WTC11 (cell line): ENCODE measurements at regions of chr1 and their contacts with region 1.

Region 1: DNA sequence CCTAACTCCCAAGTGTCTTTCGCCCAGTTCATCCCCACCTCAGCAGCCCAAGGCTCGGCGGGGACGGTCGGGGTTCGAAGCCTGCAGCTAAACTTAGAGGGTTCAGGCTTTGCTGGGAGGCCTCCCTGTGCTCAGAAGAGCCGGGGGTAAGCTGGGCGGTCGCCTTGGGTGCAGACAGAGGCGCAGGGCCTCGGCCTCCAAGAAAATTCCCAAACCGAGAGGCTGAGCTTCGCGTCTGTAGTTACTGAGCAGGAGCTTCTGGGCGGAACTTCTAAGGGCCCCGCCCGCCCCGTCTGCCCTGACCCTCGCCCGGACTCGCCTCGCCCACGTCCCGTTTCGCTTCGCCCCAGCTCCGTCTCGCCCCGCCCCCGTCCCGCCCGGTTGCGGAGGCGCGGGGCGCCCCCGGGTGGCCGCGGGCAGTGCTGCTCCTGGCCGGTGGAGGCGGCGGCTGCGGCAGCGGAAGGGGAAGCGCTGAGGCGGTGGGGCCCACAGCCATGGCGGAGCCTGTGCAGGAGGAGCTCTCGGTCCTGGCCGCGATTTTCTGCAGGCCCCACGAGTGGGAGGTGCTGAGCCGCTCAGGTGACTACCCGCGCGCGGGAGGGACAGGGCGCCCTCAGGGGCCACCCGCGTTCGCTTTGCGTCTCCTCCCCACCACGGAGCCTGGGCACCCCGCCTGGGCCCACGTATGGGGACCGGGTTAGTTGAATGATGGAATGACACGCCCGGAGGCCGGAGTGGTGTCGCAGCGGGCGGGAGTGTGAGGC is at the start of gene RWDD3:
- DNase-seq: peak; percentile 91
- ATAC-seq: peak; percentile 92
- H3K4me3 Mint-ChIP-seq: peak within 1 kb of the TSS; percentile 87
- H3K27ac Mint-ChIP-seq: peak within 1 kb of the TSS; percentile 64
- H3K4me1 Mint-ChIP-seq: peaks cover 18% of the 10 kb centered on the region
- H3K27me3 Mint-ChIP-seq: no peaks in the 10 kb centered on the region; the same call in none of the 2 replicates
- CTCF ChIP-seq: peak; percentile 72
- total RNA-seq, gene RWDD3: 13.7 to 17.4 TPM (median 13.9 TPM) in 3 replicates

Region 2: DNA sequence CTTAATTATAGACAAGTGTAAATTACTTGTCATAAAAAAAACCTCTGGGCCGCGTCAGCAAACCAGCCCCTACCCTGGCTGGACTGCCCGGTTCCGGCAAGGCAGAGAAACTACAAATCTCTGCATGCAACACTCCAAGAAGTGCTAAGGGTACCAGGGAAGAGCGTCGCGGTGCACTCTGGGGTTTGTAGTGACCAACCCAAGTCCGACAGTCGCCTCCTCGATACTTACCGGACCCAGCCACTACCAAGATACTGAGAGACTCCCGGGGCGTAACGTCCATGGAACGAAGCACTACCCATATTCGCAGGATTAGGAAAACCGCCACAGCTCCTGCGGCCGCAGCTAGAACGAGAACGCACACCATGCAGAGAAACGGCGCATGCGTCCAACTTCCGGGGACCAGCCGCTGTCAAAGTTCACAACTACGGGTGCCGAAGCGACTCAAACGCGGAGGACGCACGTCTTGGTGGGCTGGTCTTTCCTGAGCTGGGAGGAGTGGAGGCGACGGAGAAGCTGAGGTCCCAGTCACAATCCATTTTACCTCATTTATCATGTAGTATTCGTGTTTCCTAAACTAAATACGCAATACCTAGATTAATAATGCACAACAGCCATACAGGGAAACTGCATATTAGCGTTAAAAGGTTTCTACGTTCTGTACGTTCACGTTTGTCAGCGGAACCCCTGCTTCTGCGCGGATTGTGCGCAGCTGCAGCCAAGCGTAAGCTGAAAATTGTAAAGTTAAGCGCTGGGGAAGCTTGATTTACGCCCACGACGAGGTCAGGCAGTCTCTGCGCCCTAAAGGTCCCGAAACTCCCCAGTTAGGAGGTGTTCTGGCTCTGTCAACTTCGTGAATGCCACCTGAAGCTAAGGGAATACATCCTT is 161.1 kb before region 1 on chr1 and contains the start of gene ALG14:
- CTCF ChIA-PET with region 1: interaction called, 44 read pairs
- POLR2A ChIA-PET with region 1: interaction called, 4 read pairs
- DNase-seq: peak; percentile 86
- ATAC-seq: peak; percentile 99
- H3K4me3 Mint-ChIP-seq: peak within 1 kb of the TSS; percentile 97
- H3K27ac Mint-ChIP-seq: peak within 1 kb of the TSS; percentile 90
- H3K4me1 Mint-ChIP-seq: peaks cover 9% of the 10 kb centered on the region
- H3K27me3 Mint-ChIP-seq: peaks cover 2% of the 10 kb centered on the region; the same call in 1 of the 2 replicates
- CTCF ChIP-seq: no peak
- total RNA-seq, gene ALG14: 0.94 to 2.3 TPM (median 1.4 TPM) in 3 replicates

Region 3: GRCh38 chr1:95116580-95117206 is 117.2 kb before region 1 on chr1:
- CTCF ChIA-PET with region 1: interaction called, 71 read pairs
- POLR2A ChIA-PET with region 1: interaction called, 7 read pairs
- DNase-seq: peak; percentile 73
- ATAC-seq: peak; percentile 74
- H3K4me3 Mint-ChIP-seq: peak overlapping the region; percentile 92
- H3K27ac Mint-ChIP-seq: peak overlapping the region; percentile 83
- H3K4me1 Mint-ChIP-seq: peaks cover 20% of the 10 kb centered on the region
- H3K27me3 Mint-ChIP-seq: peaks cover 19% of the 10 kb centered on the region
- CTCF ChIP-seq: peak; percentile 58

Region 4: GRCh38 chr1:95223110-95223509 is 10.8 kb before region 1 on chr1:
- CTCF ChIA-PET with region 1: interaction called, 37 read pairs
- POLR2A ChIA-PET with region 1: interaction called, 4 read pairs
- DNase-seq: no peak
- ATAC-seq: no peak
- H3K4me3 Mint-ChIP-seq: no peak overlapping the region
- H3K27ac Mint-ChIP-seq: no peak overlapping the region
- H3K4me1 Mint-ChIP-seq: peaks cover 11% of the 10 kb centered on the region
- H3K27me3 Mint-ChIP-seq: no peaks in the 10 kb centered on the region; the same call in 1 of the 2 replicates
- CTCF ChIP-seq: no peak

Region 5: DNA sequence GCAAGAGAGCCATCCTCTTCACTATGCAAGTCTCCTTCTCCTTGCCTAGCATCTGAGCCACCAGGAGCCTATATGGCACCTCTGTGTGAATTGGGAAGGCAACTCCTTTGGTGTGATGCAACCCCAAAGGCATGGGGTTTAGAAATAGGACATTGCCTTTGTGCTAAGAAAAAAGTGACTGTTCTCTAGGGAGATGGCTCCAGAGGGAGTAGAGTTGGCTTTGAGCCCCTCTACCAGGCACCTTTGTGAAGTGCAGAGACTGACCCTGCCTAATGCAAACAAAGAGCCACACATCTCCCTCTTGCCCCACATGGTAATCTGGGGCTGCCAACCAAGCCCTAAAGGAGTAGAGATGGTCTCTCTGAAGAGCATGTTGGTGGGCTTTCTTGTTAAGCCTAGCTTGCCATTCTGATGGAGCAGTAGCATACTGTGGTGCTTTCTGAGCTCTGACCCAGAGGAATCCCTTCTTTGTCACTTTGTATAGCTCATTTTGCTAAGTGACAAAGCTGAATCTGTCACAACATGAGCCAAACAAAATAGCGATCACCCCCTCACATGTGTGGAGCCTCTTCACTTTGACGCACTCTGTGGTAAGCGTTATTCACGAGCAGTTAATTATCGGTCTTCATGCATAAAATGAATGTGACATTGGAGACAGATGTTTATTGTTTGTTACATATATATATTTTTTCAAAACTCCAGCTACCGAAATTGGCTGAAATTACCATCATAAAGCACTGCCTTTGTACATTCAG is 74.5 kb after region 1 on chr1:
- CTCF ChIA-PET with region 1: no interaction called
- POLR2A ChIA-PET with region 1: no interaction called
- DNase-seq: no peak
- ATAC-seq: peak; percentile 69; the same call in 1 of the 2 replicates
- H3K4me3 Mint-ChIP-seq: no peak overlapping the region
- H3K27ac Mint-ChIP-seq: no peak overlapping the region
- H3K4me1 Mint-ChIP-seq: peaks cover 38% of the 10 kb centered on the region
- H3K27me3 Mint-ChIP-seq: no peaks in the 10 kb centered on the region
- CTCF ChIP-seq: no peak